Posterior cingulate gyrus (tissue), 11 donors: ENCODE measurements at regions of chr18 and their contacts with region 1.

Region 1: DNA sequence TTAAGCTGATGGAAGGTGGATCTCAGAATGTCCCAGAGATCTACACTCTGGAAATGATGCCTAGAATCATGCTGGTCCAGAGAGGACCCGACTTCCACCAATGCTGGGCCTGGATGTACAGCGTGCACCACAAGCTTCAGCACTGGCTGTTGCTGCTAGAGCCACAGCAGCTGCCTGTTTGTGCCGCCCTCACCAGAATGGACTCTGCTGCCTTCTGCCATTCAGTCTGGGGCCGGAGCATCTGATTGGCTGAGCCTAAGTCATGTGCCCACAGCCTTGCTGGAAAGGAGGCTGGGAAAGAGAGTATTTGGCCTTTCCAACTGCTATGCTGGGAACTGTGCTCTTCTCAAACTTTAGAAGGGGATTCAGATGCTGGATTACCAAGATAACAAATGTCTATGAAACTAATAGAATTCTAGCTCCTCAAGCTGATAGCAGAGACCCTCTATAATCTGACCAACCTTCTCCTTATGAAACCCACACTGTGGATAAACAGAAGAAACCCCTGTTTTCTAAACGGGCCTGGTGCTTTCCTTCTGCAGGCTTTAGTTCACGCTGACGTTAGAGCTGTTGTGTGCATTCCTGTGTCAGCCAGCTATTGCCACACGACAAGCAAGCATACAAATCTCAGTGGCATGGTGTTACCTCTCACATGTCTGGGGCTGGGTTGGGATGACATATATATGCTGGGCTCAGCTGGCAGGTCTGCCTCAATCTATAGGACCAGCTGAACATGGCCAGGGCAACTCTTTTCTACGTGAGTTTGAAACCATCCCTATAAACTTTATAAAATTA is 4.1 kb upstream of the LOXHD1 start:
- DNase-seq: peak; percentile 87 to 99 (median 92)

Region 2: GRCh38 chr18:46148810-46149209 is 512.3 kb before region 1 on chr18:
- intact Hi-C with region 1: loop called (anchors 1 kb)
- DNase-seq: peak in 3 of 10 donors; percentile 22 to 31 (median 28)

Region 3: GRCh38 chr18:46281185-46282176 is 379.7 kb before region 1 on chr18:
- intact Hi-C with region 1: loop called (anchors 5 kb)
- DNase-seq: peak; percentile 44 to 96 (median 75)

Region 4: GRCh38 chr18:46559946-46560670 is 101.0 kb before region 1 on chr18:
- intact Hi-C with region 1: loop called (anchors 2 kb)
- DNase-seq: no peak

Region 5: DNA sequence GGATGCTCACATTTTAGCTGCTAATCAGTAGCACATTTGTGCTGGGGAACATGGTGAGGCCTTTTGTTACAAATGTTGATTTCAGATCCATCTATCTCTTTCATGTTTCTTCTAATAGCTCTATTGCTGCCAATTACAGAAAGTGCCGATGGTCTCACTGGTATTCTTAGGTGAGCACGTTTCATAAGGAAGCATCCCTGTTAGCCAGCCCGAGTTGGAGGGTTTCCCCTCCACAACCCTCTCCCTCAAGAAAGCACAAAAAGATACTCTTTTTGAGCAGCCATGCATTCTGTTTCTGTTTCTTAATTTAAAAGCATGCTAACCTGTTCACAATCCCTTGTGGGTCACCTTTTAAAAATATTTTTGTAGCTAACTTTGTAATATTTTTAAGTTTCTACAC is 126.5 kb after region 1 on chr18:
- intact Hi-C with region 1: no loop called
- DNase-seq: no peak

Region 6: DNA sequence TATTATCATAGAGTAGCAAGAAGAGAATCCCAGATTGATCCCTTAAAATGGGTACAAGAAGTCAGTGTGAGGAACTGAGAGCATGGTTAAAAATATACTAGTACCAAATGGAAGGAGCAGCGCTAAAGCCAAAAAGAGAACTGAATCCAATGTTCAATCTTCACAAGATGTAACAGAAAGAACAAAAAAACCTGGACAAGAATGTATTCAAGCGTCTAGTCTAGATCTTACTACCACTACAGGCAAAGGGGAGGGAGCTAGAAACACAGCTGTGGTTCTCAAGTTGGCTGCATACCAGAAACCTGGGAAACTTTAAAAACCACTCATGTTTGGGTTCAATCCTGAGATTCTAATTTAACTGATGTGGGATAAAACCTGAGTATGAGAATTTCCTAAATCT is 198.7 kb after region 1 on chr18:
- intact Hi-C with region 1: loop called (anchors 10 kb)
- DNase-seq: no peak